Activated CD4-positive, alpha-beta memory T cell treated with anti-CD3 and anti-CD28 coated beads for 36 hours (primary cell): ENCODE measurements at regions of chr7 and their contacts with region 1.

Region 1: GRCh38 chr7:99624484-99624883 is 7.7 kb downstream of the ZSCAN25 start:
- DNase-seq: peak; percentile 83
- H3K4me3 Mint-ChIP-seq: peak overlapping the region; percentile 77
- H3K27ac Mint-ChIP-seq: peak overlapping the region; percentile 94
- H3K4me1 Mint-ChIP-seq: peaks cover 49% of the 10 kb centered on the region
- H3K27me3 Mint-ChIP-seq: no peaks in the 10 kb centered on the region

Region 2: DNA sequence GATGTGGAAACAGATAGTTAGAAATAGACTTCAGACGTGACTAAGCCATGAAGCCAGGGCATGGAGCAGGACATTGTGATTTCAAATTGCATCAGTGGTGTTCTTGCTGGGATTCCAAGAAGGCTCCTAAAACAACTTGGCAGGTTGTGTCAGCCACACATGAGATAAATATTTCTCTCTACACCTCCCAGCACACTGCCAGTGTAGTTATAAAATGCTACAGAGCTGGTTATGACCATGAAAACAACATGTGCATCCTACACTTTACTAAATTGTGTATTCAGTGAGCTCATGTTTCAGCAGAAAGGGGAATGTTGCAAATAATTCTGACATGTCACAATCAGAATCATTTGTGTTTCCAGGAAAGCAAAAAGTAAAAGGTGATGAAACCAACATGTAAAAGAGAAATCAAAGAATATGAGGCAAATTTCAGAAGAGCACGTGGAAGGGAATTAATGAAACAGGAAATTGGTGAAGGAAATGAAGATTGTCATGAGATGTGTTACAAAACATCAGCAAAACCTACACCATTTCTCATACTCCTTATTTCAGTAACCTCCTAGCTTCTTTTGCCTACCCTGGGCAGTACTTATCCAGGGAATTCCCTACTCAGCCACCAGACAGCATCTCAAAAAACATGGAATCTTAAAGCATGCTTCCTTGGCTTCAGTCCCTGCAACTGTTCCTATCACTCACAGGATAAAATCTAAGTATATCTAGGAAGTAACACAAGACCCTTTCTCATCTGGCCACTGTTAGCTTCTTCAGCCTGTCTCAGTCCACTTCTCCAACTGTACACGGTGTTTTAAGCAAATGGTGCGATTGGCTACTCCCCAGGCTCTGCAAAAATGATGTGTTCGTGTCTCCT is 116.3 kb after region 1 on chr7:
- CTCF ChIA-PET with region 1: no interaction called
- POLR2A ChIA-PET with region 1: no interaction called
- intact Hi-C with region 1: no loop called
- DNase-seq: no peak
- H3K4me3 Mint-ChIP-seq: no peak overlapping the region
- H3K27ac Mint-ChIP-seq: peak overlapping the region; percentile 59
- H3K4me1 Mint-ChIP-seq: peaks cover 9% of the 10 kb centered on the region
- H3K27me3 Mint-ChIP-seq: peaks cover 9% of the 10 kb centered on the region

Region 3: GRCh38 chr7:99837649-99838361 is 213.3 kb after region 1 on chr7:
- CTCF ChIA-PET with region 1: no interaction called
- POLR2A ChIA-PET with region 1: no interaction called
- intact Hi-C with region 1: loop called (anchors 5 kb)
- DNase-seq: no peak
- H3K4me3 Mint-ChIP-seq: no peak overlapping the region
- H3K27ac Mint-ChIP-seq: no peak overlapping the region
- H3K4me1 Mint-ChIP-seq: peaks cover 2% of the 10 kb centered on the region
- H3K27me3 Mint-ChIP-seq: no peaks in the 10 kb centered on the region